ENCODE measurements at regions of chr1 and their contacts with region 1.

Region 1: GRCh38 chr1:46527474-46528296 is 23.8 kb downstream of the KNCN start:
- DNase-seq: peak; percentile 90
- ATAC-seq: peak; percentile 80

Region 2: DNA sequence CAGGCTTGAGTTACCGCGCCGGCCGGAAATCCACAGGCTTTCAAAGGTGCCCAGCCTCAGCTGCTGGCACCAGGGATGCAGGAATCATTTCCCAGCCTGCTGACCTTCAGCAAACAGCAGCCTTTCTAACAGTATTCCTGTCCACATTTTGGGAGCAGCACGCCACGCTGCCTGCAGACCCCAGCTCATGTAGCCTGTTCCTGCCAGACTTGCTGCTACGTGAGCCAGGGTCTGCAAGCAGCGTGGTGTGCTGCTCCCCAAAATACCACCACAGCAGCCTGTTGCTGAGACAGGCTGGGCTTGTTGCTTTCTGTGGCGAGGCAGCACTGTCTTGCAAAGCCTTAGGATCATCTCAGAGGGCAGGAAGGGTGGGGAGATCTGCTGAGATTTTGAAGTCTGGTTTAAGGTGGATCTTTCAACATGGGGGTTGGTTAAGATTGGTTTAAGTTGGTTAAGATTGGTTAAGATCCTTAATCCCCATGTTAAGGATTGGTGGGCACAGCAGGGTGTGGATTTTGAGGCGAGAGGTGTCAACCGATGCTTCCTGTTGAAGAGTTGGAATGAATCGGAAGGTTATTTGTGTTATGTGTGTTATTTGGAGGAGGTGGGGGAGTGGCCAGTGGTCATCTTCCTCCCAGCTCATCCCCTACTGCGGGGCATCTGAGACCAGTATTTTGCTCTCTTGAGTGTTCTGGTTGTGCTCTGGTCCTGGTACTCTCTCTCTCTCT is 120.6 kb before region 1 on chr1:
- intact Hi-C with region 1: loop called (anchors 2 kb)
- DNase-seq: no peak
- ATAC-seq: no peak

Region 3: DNA sequence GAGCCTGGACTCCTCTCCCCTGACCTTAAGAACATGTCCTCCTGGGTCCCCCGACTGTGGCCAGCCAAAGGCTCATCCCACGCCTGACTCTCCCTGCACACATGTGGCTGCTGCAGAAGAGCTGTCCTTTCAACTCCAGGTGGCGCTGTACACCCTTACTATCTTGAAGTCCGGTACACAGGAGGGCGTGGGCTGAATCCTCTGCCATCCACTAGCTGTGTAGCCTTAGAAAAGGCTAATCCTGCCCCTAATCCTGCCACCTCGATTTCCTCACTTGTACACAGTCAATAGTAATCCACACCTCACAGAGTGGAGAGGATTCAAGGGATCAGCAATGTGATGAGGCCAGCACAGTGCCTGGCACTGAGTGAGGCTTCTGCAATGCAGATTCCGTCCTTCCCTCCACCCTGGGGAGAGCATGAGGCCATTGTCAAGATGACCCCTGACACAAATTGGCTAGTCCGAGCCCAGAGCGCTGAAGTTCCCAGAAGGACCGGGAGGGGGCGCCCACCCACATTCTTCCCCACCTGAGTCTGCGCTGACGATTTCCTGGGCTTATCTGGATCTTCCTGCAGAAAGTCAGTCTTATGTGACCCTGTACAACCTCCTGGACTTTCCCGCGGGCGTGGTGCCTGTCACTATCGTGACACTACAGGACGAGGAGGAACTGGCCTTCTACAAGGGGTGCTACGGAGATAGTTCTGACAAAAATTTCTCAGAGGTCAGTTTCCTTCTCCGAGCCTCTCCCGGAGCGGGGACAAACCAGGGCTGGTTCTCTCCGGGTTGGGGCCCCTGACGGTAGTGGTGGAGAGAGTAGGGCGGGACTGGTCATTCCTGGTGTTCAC is 85.1 kb before region 1 on chr1:
- intact Hi-C with region 1: loop called (anchors 1 kb)
- DNase-seq: peak; percentile 85
- ATAC-seq: peak; percentile 65

Region 4: DNA sequence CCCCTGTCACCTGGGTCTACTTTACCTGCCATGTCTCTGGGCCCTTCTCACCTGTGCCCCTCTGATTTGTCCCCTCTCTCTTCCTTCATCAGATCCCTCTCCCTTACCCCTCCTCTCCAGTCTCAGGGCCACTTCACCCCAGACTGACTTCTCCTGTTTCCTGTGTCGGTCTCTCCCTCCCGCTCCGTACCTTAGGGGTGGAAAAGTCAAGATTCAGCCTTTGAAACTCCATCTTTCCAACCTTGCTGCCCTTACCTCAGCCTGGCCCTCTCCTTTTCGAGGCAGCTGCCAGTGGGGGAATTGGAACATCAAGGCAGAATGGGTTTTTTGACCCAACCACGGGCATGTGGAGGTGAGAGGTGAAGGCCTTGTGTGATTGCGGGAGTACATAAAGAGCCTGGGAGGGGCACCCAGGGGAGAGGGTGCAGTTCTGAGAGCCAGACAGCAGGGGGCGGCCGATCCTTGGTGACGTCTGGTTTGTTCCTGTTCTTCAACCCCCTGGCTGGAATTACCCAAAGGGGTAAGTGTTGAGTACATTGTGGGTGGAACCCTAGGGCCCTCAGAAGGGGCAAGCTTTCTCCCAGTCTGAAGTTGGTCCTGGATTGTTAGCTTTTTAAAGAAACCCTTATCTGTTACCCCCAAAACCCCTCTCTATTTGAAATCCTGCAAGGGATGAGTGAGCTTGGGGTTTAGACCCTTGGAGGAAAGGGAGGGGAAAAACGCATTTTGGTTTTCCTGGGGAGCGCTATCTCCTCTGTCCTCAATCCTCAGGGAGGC is 50.3 kb before region 1 on chr1:
- intact Hi-C with region 1: loop called (anchors 5 kb)
- DNase-seq: peak; percentile 86
- ATAC-seq: peak; percentile 74

Region 5: GRCh38 chr1:46653405-46653958 is 125.8 kb after region 1 on chr1:
- intact Hi-C with region 1: no loop called
- DNase-seq: no peak
- ATAC-seq: no peak

Measured in Right ventricle myocardium inferior (tissue), 1 donor.